Activated naive CD4-positive, alpha-beta T cell treated with anti-CD3 and anti-CD28 coated beads for 36 hours (primary cell): ENCODE measurements at regions of chr2 and their contacts with region 1.

Region 1: GRCh38 chr2:101655702-101656422 is 41.6 kb upstream of the MAP4K4 start:
- DNase-seq: no peak
- H3K4me3 Mint-ChIP-seq: no peak overlapping the region
- H3K27ac Mint-ChIP-seq: no peak overlapping the region
- H3K4me1 Mint-ChIP-seq: peaks cover 25% of the 10 kb centered on the region
- H3K27me3 Mint-ChIP-seq: no peaks in the 10 kb centered on the region

Region 2: DNA sequence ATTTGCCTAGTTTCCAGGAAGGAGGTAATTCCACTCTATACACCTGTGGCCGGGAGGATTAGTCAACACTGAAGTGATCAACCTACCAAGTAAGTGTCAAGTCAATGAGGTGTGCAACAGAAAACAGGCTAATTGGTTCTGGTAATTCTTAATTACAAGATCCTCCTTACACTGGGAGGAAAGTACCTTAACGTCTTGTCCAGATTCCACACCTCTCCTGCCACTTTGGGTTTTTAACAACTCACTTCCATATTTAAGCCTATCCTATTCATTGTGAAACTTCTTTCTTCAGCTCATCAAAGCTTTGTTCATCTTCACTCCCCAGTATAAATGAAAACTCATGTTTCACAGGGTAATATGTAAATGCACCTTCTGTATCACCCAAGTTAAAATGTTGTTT is 19.6 kb after region 1 on chr2:
- CTCF ChIA-PET with region 1: no interaction called
- intact Hi-C with region 1: loop called (anchors 1 kb)
- DNase-seq: peak; percentile 21
- H3K4me3 Mint-ChIP-seq: no peak overlapping the region
- H3K27ac Mint-ChIP-seq: peak overlapping the region; percentile 3
- H3K4me1 Mint-ChIP-seq: peaks cover 23% of the 10 kb centered on the region
- H3K27me3 Mint-ChIP-seq: no peaks in the 10 kb centered on the region

Region 3: DNA sequence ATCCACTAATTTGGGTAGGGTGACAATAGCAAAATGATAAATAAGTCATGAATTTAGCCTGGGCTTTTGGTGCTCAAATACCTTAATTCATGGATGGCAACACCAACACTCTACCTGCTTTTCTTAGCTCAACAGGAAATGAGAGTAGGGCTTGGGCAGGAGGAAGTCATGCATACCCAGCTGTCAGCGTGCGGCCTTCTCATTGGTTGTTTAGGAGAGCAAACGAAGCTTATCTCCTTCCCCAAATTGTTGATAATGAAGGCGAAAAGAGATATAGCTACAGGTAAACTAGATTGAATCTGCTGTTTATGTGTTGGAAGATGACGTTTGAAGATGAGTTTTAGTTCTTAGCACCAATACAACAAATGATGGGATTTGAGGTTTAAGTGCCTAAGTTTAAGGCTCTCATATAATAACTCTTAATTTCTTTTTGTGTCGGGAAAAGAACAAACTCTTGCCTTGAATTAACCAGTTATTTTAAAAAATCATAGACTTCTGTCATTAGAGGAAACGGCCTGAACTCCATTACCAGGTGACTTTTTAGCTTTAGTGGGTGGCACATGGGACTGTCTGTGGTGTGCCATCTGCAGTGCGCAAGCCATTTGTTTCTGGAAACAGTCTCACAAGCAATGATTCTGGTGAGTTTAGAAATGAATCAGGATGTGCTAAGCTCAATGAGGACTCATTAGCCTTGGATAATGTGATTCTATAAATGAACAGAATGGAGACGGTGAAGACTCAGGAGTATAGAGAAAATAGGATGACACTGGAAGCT is 61.4 kb after region 1 on chr2:
- CTCF ChIA-PET with region 1: no interaction called
- intact Hi-C with region 1: loop called (anchors 1 kb)
- DNase-seq: peak; percentile 75
- H3K4me3 Mint-ChIP-seq: peak overlapping the region; percentile 38
- H3K27ac Mint-ChIP-seq: peak overlapping the region; percentile 95
- H3K4me1 Mint-ChIP-seq: peaks cover 92% of the 10 kb centered on the region
- H3K27me3 Mint-ChIP-seq: no peaks in the 10 kb centered on the region